ENCODE measurements at regions of chr4 and their contacts with region 1.

Region 1: DNA sequence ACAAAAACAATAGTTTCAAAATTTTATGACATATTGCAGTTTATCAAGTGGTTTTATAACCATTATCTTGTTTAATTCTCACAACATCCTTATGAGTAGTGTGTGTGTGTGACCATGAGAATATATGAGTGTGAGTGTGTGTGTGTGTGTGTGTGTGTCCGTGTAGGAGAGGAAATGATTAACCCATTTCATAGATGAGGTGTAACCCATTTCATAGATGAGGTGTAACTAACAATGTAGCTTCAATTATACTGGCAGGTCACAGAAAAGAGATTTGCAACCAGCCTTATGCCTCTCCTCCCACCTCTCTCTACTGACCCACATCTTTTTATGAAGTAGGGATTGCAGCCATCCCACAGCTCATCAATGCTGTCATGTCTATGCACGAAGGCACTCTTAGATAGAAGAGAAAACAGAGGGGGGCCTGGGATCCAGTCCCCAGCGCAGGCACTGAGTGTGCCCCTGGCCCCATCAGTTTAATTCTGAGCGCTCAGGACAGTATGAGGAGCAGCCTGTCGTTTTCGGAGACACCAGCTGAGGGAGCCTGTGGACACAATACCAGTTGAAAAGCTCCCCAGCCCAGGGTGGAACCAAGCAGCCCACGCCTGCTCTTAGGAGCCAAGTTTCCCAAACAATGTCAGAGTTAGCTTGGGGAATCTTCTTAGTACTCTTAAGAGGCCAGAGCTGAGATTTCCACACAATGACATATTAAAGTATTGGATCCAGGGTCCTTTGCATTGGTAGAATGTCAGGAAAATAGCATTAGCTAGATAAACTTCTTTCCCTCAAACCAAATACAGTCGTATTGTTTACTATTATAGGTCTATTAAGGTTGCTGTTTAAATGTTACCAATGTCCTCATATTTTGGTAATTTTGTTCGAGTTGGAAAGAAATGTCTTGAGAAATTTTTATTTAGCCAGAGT is 88.6 kb downstream of the PALLD start:
- DNase-seq: peak; percentile 77
- H3K4me3 ChIP-seq: no peak overlapping the region
- H3K27ac ChIP-seq: no peak overlapping the region
- H3K4me1 ChIP-seq: peaks cover 0 to 7% (median 3%) of the 10 kb centered on the region in 4 donors
- H3K27me3 ChIP-seq: no peaks in the 10 kb centered on the region
- CTCF ChIP-seq: peak; percentile 63 to 71 (median 67)
- EP300 ChIP-seq: no peak
- POLR2A ChIP-seq: no peak

Region 2: GRCh38 chr4:167578906-167579305 is 1006.5 kb before region 1 on chr4:
- in situ Hi-C with region 1: no loop called
- intact Hi-C with region 1: no loop called
- DNase-seq: no peak
- H3K4me3 ChIP-seq: no peak overlapping the region
- H3K27ac ChIP-seq: no peak overlapping the region
- H3K4me1 ChIP-seq: no peaks in the 10 kb centered on the region
- H3K27me3 ChIP-seq: no peaks in the 10 kb centered on the region
- CTCF ChIP-seq: no peak
- EP300 ChIP-seq: no peak
- POLR2A ChIP-seq: no peak

Region 3: GRCh38 chr4:168631241-168632162 is 46.1 kb after region 1 on chr4:
- in situ Hi-C with region 1: no loop called
- intact Hi-C with region 1: loop called (anchors 2 kb)
- DNase-seq: peak; percentile 60
- H3K4me3 ChIP-seq: peak overlapping the region; percentile 30 to 70 (median 58)
- H3K27ac ChIP-seq: peak overlapping the region; percentile 31 to 86 (median 84)
- H3K4me1 ChIP-seq: peaks cover 0 to 25% (median 5%) of the 10 kb centered on the region in 4 donors
- H3K27me3 ChIP-seq: peaks cover 5% of the 10 kb centered on the region
- CTCF ChIP-seq: peak; percentile 42 to 59 (median 57)
- EP300 ChIP-seq: no peak
- POLR2A ChIP-seq: no peak

Region 4: DNA sequence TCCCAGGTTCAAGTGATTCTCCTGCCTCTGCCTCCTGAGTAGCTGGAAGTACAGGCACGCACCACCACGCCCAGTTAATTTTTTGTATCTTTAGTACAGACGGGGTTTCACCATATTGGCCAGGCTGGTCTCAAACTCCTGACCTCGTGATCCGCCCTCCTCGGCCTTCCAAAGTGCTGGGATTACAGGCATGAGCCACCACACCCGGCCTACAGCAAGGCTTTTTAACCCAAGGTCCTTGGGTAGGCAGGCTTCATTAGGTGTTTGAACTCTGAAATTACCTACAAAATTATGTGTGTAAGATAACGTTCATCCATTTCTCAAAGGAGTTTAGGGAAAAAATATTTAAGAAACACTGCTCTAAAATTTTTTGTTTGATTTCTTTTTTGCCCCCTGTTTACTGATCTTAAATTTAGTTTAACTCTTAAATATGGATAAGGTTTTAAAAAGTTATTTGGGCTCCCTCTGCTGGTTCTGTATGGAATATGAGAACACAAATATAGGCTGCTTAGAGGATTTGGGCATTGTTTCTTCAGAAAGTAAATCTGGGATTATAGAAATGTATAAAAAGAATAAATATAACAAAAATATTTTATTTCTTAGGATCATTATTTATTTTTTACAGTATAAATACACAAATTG is 331.8 kb after region 1 on chr4:
- in situ Hi-C with region 1: loop called (anchors 10 to 25 kb)
- intact Hi-C with region 1: no loop called
- DNase-seq: no peak
- H3K4me3 ChIP-seq: no peak overlapping the region
- H3K27ac ChIP-seq: peak overlapping the region in 3 of 4 donors; percentile 23 to 50 (median 28)
- H3K4me1 ChIP-seq: peaks cover 0 to 3% (median 0%) of the 10 kb centered on the region in 4 donors
- H3K27me3 ChIP-seq: no peaks in the 10 kb centered on the region
- CTCF ChIP-seq: peak; percentile 50 to 62 (median 54)
- EP300 ChIP-seq: no peak
- POLR2A ChIP-seq: no peak

Region 5: DNA sequence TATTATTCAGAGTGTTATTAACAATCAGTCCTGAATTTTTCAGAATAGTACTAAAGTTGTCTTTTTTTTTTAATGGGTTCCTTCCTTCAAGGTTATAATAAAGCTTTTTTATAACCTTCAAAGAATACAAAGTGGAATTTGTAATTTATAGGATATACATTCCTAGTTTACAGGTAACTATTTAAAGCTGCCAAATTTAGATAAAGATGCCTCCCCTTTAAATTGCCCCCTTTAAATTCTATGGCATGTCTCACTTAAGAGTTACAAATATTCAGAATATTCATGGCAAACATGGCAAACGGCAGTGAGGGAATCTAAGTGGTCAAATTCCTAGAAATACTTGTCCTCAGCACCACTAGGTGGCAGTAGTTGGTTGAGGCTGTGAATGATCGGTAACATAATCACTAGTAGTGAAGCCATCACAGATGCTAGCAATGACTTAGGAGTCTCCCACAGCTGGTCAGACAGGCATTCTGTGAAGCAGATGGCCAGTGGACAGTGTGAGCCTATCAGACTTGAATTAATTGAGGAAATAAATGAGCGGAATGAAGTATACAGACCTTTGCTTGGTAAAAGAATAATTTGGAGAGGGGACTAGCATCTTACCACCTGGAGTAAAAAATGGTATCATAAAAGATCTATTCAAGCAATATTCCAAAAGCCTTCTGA is 338.2 kb after region 1 on chr4:
- in situ Hi-C with region 1: loop called (anchors 10 to 25 kb)
- intact Hi-C with region 1: no loop called
- DNase-seq: peak; percentile 54
- H3K4me3 ChIP-seq: no peak overlapping the region
- H3K27ac ChIP-seq: peak overlapping the region in 2 of 4 donors; percentile 6 to 18
- H3K4me1 ChIP-seq: no peaks in the 10 kb centered on the region
- H3K27me3 ChIP-seq: no peaks in the 10 kb centered on the region
- CTCF ChIP-seq: peak; percentile 66 to 82 (median 73)
- EP300 ChIP-seq: no peak
- POLR2A ChIP-seq: no peak

Measured in transverse colon (tissue), 4 donors.